AG04449 (cell line): ENCODE measurements at regions of chr4 and their contacts with region 1.

Region 1: GRCh38 chr4:168931182-168931650 is 78.8 kb downstream of the CBR4 start:
- DNase-seq: no peak
- H3K4me3 ChIP-seq: no peak overlapping the region
- CTCF ChIP-seq: no peak

Region 2: GRCh38 chr4:169059306-169060211 is 128.3 kb after region 1 on chr4:
- CTCF ChIA-PET with region 1: no interaction called
- POLR2A ChIA-PET with region 1: no interaction called
- DNase-seq: no peak
- H3K4me3 ChIP-seq: peak overlapping the region; percentile 21; the same call in 1 of the 2 replicates
- CTCF ChIP-seq: no peak

Region 3: GRCh38 chr4:169566021-169566818 is 635.0 kb after region 1 on chr4:
- CTCF ChIA-PET with region 1: interaction called, 22 read pairs
- POLR2A ChIA-PET with region 1: no interaction called
- DNase-seq: no peak
- H3K4me3 ChIP-seq: no peak overlapping the region
- CTCF ChIP-seq: peak; percentile 33